GM13977 (cell line): ENCODE measurements at regions of chr10 and their contacts with region 1.

Region 1: DNA sequence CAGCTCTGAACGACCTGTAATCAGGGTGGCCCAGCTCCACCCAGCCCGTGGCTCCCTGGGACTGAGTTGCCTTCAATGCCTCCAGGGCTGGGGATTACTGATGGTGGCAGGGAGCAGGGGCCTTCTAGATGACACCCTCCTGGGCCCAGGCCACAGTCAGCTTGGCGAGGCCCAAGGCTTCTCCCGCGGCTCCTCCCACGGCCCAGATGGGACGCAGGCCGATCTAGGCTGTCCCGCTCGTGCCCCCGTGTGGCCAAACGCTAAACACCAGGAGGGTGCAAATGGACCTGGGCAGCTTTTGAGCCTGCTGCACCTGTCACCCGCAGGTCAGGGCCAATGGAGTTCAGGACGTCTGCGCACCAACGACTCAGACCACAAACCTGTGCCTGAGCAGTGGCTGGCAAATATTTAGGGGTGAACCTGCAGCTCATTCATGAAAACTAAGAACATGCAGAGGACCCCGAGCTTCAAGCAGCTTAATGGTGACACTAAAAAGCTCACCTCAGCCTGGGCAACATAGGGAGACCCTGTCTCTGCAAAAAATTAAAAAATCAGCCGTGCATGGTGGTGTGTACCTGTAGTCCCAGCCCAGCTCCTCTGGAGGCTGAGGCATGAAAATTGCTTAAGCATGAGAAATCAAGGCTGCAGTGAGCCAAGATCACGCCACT is 43.2 kb downstream of the ASB13 start:
- DNase-seq: peak; percentile 88
- CTCF ChIP-seq: peak; percentile 97

Region 2: DNA sequence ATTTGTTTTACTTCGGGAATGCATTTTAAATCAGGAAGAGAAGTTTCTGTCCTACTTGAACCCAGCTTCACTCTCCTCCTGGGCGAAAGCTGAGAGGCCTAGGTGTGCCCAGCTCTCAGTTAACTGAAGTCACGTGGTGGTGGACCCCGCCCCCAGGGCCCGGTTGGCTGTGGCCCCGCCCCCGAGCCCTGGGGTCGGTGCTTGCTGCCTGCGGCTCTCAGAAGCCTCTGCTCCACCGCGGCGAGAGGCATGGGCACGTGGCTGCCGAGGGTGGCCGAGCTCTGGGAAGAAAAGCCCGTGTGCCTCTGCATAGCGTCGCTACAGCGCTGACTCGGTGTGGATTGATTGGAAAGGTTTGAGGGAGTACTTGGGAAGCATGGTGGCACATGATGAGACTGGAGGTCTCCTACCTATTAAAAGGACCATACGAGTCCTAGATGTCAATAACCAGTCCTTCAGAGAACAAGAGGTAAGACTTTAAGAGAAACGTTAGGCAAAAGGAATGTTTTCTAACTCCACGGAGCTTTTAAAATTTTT is 176.8 kb before region 1 on chr10:
- in situ Hi-C with region 1: loop called (anchors 10 kb)
- DNase-seq: peak; percentile 63
- CTCF ChIP-seq: no peak